Activated CD8-positive, alpha-beta T cell treated with anti-CD3 and anti-CD28 coated beads for 36 hours (primary cell): ENCODE measurements at regions of chr17 and their contacts with region 1.

Region 1: DNA sequence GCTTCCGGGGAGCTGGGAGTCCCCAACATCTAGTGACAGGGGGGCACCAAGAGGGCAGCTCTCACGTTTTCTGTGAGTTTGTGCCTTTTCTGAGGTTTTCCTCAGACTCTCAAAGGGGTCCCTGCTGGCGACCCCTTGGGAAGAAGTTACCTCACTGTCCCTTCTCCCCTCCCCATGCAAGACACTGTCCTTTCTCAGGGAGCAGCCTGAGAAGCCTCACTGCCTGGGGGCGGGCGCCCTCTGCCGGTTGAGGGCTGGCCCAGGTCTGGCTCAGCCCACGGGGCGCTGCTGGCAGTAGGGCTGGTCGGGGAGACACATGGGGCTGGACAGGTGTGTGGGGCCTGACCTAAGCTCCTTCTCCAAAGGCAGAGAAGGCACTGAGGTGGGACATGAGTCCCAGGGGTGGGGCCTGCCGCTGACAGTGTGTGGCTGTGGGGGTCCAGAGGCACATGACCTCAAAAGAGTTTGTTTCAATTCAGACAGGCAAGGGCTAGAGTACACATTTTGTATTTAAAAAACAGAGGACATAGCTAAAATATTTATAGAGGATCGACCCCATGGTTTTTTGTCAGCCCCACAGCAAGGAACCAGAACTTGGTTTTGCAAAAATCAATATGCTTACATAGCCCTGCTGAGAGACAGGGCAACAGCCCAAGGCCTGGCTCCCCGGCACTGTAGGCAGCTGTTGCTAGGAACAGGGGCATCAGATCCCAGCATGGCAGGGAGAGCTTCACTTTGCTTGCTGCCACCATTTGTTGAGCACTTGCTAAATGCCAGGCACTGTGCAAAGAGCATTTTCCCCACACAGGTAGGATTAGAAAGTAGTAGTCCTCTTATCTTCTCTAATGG is 18.5 kb upstream of the ALDH3A1 start:
- DNase-seq: peak; percentile 83
- ATAC-seq: peak; percentile 89
- H3K4me3 Mint-ChIP-seq: no peak overlapping the region
- H3K27ac Mint-ChIP-seq: no peak overlapping the region
- H3K4me1 Mint-ChIP-seq: peaks cover 24% of the 10 kb centered on the region
- H3K27me3 Mint-ChIP-seq: peaks cover 1% of the 10 kb centered on the region
- CTCF ChIP-seq: peak; percentile 92

Region 2: GRCh38 chr17:19362277-19363113 is 404.2 kb before region 1 on chr17 and contains the start of gene B9D1:
- CTCF ChIA-PET with region 1: interaction called, 13 read pairs
- POLR2A ChIA-PET with region 1: interaction called, 4 read pairs
- intact Hi-C with region 1: no loop called
- DNase-seq: peak; percentile 92
- ATAC-seq: peak; percentile 92
- H3K4me3 Mint-ChIP-seq: peak within 1 kb of the TSS; percentile 81
- H3K27ac Mint-ChIP-seq: peak within 1 kb of the TSS; percentile 81
- H3K4me1 Mint-ChIP-seq: peaks cover 5% of the 10 kb centered on the region
- H3K27me3 Mint-ChIP-seq: peaks cover 4% of the 10 kb centered on the region
- CTCF ChIP-seq: peak; percentile 98
- total RNA-seq, gene B9D1: 7.2 to 9.4 TPM

Region 3: DNA sequence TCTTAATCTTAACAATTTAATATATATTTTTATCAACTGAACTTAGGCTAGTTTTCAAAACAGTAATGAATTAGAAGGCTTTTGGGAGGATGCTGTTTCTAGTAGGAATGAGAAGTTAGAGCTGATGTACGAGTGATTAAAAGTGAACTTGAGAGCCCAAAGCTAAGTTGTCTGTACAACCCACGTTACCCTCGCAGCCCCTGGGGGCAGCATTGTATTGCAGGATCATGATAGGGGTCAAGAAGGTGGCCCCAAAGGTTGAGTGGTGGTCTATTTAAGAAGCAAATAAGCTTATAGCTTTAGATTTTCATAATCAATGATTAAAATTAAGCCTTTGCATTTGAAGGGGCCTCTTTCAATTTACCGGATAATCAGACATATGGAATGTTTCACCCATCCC is 151.7 kb before region 1 on chr17:
- CTCF ChIA-PET with region 1: interaction called, 11 read pairs
- POLR2A ChIA-PET with region 1: interaction called, 3 read pairs
- intact Hi-C with region 1: no loop called
- DNase-seq: no peak
- ATAC-seq: no peak
- H3K4me3 Mint-ChIP-seq: no peak overlapping the region
- H3K27ac Mint-ChIP-seq: no peak overlapping the region
- H3K4me1 Mint-ChIP-seq: peaks cover 3% of the 10 kb centered on the region
- H3K27me3 Mint-ChIP-seq: no peaks in the 10 kb centered on the region
- CTCF ChIP-seq: no peak

Region 4: GRCh38 chr17:19672009-19672750 is 94.5 kb before region 1 on chr17:
- CTCF ChIA-PET with region 1: no interaction called
- POLR2A ChIA-PET with region 1: no interaction called
- intact Hi-C with region 1: no loop called
- DNase-seq: no peak
- ATAC-seq: no peak
- H3K4me3 Mint-ChIP-seq: no peak overlapping the region
- H3K27ac Mint-ChIP-seq: no peak overlapping the region
- H3K4me1 Mint-ChIP-seq: no peaks in the 10 kb centered on the region
- H3K27me3 Mint-ChIP-seq: no peaks in the 10 kb centered on the region
- CTCF ChIP-seq: no peak

Region 5: DNA sequence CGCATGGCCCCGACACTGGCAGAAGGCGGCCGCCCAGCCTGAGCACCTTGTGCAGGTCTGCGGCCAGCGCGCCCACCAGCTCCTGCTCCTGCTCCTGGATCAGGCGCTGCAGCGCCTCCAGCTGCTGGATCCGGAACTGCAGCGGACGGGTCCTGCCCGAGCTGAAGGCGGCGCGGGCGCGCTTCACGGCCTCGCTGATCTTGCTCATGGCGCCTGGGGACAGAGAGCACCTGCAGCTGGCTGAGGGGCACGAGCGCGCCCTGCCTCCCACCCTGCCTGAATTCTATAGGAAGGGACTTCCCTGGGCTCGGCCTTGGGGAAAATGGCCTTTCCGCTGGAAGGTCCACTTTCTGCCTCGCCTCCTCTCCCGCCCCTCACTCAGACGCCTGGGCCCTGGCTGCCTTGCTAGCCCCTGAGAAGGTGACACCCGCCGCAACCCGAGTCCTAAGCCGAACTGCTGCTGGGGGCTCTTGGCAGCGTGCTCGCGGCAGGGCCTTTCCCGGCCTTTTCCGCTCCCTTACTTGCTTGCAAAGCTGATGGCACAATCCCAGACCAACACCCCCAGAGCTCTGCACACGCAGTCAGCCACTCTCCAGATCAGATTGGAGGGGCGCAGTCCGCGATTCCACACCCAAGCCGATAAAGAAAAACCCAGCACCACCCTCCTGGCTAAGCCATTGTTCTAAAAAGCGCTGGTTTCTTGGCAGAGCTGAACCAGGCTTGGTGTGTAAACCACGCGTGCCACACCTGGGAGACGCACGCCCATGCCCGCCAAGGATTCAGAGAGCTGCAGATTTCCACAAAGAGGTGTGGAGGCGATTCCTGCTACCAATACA is 21.5 kb before region 1 on chr17:
- CTCF ChIA-PET with region 1: interaction called, 17 read pairs
- POLR2A ChIA-PET with region 1: no interaction called
- intact Hi-C with region 1: no loop called
- DNase-seq: peak; percentile 95
- ATAC-seq: peak; percentile 99
- H3K4me3 Mint-ChIP-seq: peak overlapping the region; percentile 70
- H3K27ac Mint-ChIP-seq: no peak overlapping the region
- H3K4me1 Mint-ChIP-seq: peaks cover 2% of the 10 kb centered on the region
- H3K27me3 Mint-ChIP-seq: no peaks in the 10 kb centered on the region
- CTCF ChIP-seq: peak; percentile 90

Region 6: DNA sequence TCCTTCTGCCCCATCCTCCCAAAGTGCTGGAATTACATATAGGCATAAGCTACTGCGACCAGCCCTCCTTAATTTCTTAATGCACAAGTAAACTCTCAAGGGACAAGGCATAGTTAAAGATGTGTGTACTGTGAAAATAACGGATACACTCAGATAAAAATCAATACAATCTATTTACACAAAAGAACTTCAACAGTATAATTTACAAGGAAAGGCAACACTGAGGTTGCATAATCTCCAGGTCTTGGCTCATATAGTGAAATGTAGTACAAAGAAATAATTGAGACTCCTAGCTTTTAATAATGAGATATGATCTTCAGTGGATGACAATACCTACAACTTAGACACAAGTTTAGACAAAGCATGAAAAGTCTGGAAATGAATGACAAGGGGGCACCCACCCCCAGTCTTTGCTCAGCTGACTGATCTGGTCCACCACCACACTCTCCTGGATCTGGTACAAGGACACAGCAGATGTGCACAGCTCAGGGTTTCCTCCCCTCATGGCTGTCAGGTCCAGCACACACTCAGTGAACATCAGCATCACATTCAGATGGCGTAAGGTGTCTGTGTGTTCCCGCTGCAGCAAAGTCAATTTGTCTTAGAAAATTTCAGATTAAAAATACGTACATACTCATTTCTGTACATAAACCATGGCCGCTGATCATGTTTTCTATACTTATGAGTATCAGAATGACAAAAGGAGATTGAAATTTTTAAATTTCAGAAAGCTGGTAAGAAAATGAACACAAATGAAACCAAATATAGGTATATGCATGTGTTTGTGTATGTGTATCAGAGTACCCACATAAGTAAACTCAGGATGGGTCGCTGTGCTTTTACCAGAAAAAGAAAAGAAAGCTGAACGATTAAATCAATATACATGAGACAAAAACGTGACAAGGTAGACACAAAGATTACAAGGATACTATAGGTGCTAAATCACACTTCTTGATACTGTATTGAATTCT is 15.1 kb after region 1 on chr17:
- CTCF ChIA-PET with region 1: interaction called, 14 read pairs
- POLR2A ChIA-PET with region 1: no interaction called
- intact Hi-C with region 1: no loop called
- DNase-seq: no peak
- ATAC-seq: no peak
- H3K4me3 Mint-ChIP-seq: no peak overlapping the region
- H3K27ac Mint-ChIP-seq: no peak overlapping the region
- H3K4me1 Mint-ChIP-seq: no peaks in the 10 kb centered on the region
- H3K27me3 Mint-ChIP-seq: no peaks in the 10 kb centered on the region
- CTCF ChIP-seq: no peak